ENCODE measurements at regions of chr2 and their contacts with region 1.

Region 1: GRCh38 chr2:64609227-64609941 is 44.3 kb downstream of the SERTAD2 start:
- DNase-seq: no peak
- H3K4me3 ChIP-seq: no peak overlapping the region; the same call in 1 of the 2 replicates
- CTCF ChIP-seq: peak; percentile 14

Region 2: DNA sequence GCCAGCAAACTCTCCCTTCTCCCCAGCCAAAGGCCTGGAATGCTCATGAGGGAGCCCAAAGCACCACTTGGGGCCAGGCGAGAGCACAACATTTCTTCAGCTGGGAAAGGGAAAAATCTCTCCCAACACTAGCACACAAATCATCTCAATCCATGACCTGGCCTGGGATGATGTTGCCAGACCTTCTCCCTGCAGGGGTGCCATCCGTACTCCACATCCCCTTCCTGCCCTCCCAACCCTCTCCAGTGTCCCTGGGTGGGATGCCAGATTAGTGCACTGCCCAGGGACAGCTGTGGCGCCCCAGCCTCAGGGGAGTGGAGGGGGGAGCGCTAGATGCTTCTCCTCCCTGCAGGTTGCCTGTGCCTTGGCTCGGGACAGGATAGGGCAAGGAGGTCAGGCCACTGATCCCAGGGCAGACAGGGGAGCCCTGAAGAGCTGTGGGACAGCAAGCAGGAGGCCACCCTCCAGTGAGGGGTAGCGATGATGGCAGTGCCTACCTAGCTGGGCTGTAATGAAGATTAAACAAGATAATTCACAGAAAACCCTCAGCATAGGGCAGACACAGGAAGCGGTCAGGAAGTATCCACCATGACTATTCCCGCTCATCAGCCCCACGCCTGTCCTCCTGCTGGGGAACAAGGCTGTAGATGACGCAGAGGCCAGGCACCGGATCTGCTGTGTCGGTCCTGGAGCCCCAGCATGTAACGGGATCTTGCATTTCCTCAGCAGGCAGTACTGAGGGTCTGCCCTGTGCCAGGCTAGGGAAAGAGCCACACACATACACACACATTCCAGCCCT is 13.3 kb after region 1 on chr2:
- CTCF ChIA-PET with region 1: interaction called, 29 read pairs
- POLR2A ChIA-PET with region 1: no interaction called
- DNase-seq: no peak
- H3K4me3 ChIP-seq: no peak overlapping the region
- CTCF ChIP-seq: peak; percentile 29

Region 3: GRCh38 chr2:64963719-64964118 is 354.3 kb after region 1 on chr2:
- CTCF ChIA-PET with region 1: no interaction called
- POLR2A ChIA-PET with region 1: no interaction called
- DNase-seq: no peak
- H3K4me3 ChIP-seq: no peak overlapping the region
- CTCF ChIP-seq: no peak

Measured in AG04449 (cell line).